Activated CD4-positive, alpha-beta T cell treated with anti-CD3 and anti-CD28 coated beads, Interleukin-2, amount 10 ng/mL, durations not matched to agents 24 days and 14 days (primary cell): ENCODE measurements at regions of chr1 and their contacts with region 1.

Region 1: GRCh38 chr1:184075055-184076029 is 23.8 kb downstream of the TSEN15 start:
- DNase-seq: peak; percentile 78
- H3K4me3 Mint-ChIP-seq: no peak overlapping the region
- H3K27ac Mint-ChIP-seq: no peak overlapping the region
- H3K4me1 Mint-ChIP-seq: peaks cover 12% of the 10 kb centered on the region
- H3K27me3 Mint-ChIP-seq: no peaks in the 10 kb centered on the region

Region 2: GRCh38 chr1:184051485-184052193 is 23.7 kb before region 1 on chr1 and contains the start of gene TSEN15:
- intact Hi-C with region 1: no loop called
- DNase-seq: peak; percentile 93
- H3K4me3 Mint-ChIP-seq: peak within 1 kb of the TSS; percentile 96
- H3K27ac Mint-ChIP-seq: peak within 1 kb of the TSS; percentile 98
- H3K4me1 Mint-ChIP-seq: peaks cover 30% of the 10 kb centered on the region
- H3K27me3 Mint-ChIP-seq: peaks cover 25% of the 10 kb centered on the region
- total RNA-seq, gene TSEN15: 44.9 and 48.3 TPM in 2 replicates

Region 3: GRCh38 chr1:184222652-184223052 is 147.3 kb after region 1 on chr1:
- intact Hi-C with region 1: loop called (anchors 1 kb)
- DNase-seq: peak; percentile 82
- H3K4me3 Mint-ChIP-seq: no peak overlapping the region
- H3K27ac Mint-ChIP-seq: no peak overlapping the region
- H3K4me1 Mint-ChIP-seq: peaks cover 4% of the 10 kb centered on the region
- H3K27me3 Mint-ChIP-seq: peaks cover 12% of the 10 kb centered on the region

Region 4: GRCh38 chr1:184494929-184495328 is 419.6 kb after region 1 on chr1:
- intact Hi-C with region 1: loop called (anchors 10 kb)
- DNase-seq: no peak
- H3K4me3 Mint-ChIP-seq: no peak overlapping the region
- H3K27ac Mint-ChIP-seq: no peak overlapping the region
- H3K4me1 Mint-ChIP-seq: peaks cover 16% of the 10 kb centered on the region
- H3K27me3 Mint-ChIP-seq: peaks cover 5% of the 10 kb centered on the region

Region 5: DNA sequence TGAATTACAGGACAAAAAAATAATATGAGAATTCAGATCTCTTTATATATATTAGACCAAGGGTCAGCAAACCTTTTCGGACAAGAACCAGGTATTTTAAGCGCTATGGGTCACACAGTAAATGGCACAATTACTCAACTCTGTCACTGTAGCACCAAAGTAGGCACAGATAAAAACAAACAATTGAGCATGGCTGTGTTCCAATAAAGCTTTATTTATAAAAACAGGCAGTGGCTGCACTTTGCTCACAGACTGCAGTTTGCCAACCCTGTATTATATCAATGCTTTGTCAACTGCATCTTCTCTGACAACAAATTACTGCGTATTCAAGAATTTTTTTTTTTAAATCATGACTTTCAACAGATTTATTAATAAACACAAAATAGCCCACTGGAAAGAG is 649.5 kb after region 1 on chr1:
- intact Hi-C with region 1: no loop called
- DNase-seq: no peak
- H3K4me3 Mint-ChIP-seq: no peak overlapping the region
- H3K27ac Mint-ChIP-seq: no peak overlapping the region
- H3K4me1 Mint-ChIP-seq: no peaks in the 10 kb centered on the region
- H3K27me3 Mint-ChIP-seq: no peaks in the 10 kb centered on the region

Region 6: GRCh38 chr1:184982002-184982954 is 906.9 kb after region 1 on chr1:
- intact Hi-C with region 1: loop called (anchors 5 kb)
- DNase-seq: peak; percentile 92
- H3K4me3 Mint-ChIP-seq: no peak overlapping the region
- H3K27ac Mint-ChIP-seq: no peak overlapping the region
- H3K4me1 Mint-ChIP-seq: peaks cover 7% of the 10 kb centered on the region
- H3K27me3 Mint-ChIP-seq: peaks cover 44% of the 10 kb centered on the region